Caco-2 (cell line): ENCODE measurements at regions of chr3 and their contacts with region 1.

Region 1: DNA sequence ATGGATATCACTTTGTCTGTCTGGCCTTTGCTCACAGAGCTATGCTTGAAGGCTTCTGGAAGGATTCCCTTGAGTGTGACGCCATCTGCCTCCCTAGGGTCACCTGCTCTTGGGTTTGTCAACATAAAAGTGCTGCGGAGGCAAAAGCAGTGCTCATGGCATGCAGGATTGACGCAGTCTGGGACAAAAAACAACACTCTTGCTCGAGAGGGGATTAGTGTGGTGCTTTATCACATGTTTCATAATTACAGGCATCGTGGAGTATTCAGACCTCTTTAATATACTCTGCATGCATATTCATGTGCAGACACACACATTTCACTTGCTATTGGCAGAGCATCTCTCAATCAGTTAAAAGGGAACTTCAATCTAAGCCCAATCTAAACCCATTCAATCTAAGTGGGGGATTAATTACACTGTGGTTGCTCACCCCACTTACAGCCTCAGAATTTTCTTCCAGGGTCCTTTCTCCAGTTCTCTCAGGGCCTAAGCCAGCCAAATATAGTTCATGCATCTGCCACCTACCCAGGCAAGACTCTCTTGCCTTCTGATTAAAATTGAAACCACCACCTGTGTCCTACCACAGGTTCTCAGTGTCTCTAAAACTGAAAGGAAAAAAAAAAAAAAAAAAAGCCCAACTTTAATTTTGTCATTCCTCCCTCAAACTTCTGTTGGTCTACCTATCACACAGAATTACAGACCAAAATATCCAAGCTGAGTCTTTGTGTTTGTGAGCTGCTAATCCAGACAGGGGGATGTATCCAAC is 75.6 kb downstream of the BFSP2 start:
- DNase-seq: peak in 1 of 2 experiments; percentile 29
- H3K4me3 ChIP-seq: no peak overlapping the region
- H3K4me3 Mint-ChIP-seq: no peak overlapping the region
- H3K27ac Mint-ChIP-seq: peak overlapping the region; percentile 34
- H3K4me1 ChIP-seq: peaks cover 74% of the 10 kb centered on the region
- H3K4me1 Mint-ChIP-seq: peaks cover 70% of the 10 kb centered on the region
- H3K27me3 ChIP-seq: no peaks in the 10 kb centered on the region
- H3K27me3 Mint-ChIP-seq: no peaks in the 10 kb centered on the region
- CTCF ChIP-seq: no peak

Region 2: GRCh38 chr3:133443649-133444422 is 31.6 kb before region 1 on chr3:
- CTCF ChIA-PET with region 1: interaction called, 3 read pairs
- POLR2A ChIA-PET with region 1: no interaction called
- intact Hi-C with region 1: loop called (anchors 5 kb)
- DNase-seq: no peak
- H3K4me3 ChIP-seq: no peak overlapping the region
- H3K4me3 Mint-ChIP-seq: no peak overlapping the region
- H3K27ac Mint-ChIP-seq: peak overlapping the region; percentile 1
- H3K4me1 ChIP-seq: 0 out of 2 replicates have a peak, but pooled peaks cover 3% of the 10 kb centered on the region
- H3K4me1 Mint-ChIP-seq: peaks cover 13% of the 10 kb centered on the region
- H3K27me3 ChIP-seq: no peaks in the 10 kb centered on the region
- H3K27me3 Mint-ChIP-seq: no peaks in the 10 kb centered on the region
- CTCF ChIP-seq: peak in 1 of 2 experiments; percentile 9

Region 3: GRCh38 chr3:133452641-133453319 is 22.6 kb before region 1 on chr3:
- CTCF ChIA-PET with region 1: interaction called, 7 read pairs
- POLR2A ChIA-PET with region 1: no interaction called
- intact Hi-C with region 1: loop called (anchors 1 kb)
- DNase-seq: peak; percentile 80 to 82
- H3K4me3 ChIP-seq: no peak overlapping the region
- H3K4me3 Mint-ChIP-seq: peak overlapping the region; percentile 59
- H3K27ac Mint-ChIP-seq: peak overlapping the region; percentile 72
- H3K4me1 ChIP-seq: peaks cover 60% of the 10 kb centered on the region
- H3K4me1 Mint-ChIP-seq: peaks cover 48% of the 10 kb centered on the region
- H3K27me3 ChIP-seq: no peaks in the 10 kb centered on the region
- H3K27me3 Mint-ChIP-seq: no peaks in the 10 kb centered on the region
- CTCF ChIP-seq: no peak

Region 4: DNA sequence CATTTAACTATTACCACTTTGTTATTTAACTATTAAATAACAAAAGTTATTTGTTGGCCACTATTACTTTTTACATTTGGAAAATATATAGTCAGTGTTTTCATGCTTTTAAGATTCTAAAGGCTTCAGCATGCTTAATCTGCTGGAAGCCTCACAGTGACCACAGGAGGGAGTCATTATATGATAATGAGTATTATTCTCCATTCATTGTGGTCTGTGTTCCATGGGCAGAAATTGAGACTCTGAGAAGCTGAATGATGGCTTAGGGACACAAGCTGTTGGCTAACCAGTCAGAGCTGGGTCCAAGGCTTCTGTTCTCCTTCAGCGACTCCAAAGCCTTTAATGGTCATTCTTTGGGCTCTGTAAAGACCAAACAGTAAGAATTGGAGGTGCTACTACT is 10.9 kb before region 1 on chr3:
- CTCF ChIA-PET with region 1: interaction called, 3 read pairs
- POLR2A ChIA-PET with region 1: no interaction called
- intact Hi-C with region 1: loop called (anchors 1 kb)
- DNase-seq: no peak
- H3K4me3 ChIP-seq: no peak overlapping the region
- H3K4me3 Mint-ChIP-seq: no peak overlapping the region
- H3K27ac Mint-ChIP-seq: no peak overlapping the region
- H3K4me1 ChIP-seq: peaks cover 46% of the 10 kb centered on the region
- H3K4me1 Mint-ChIP-seq: peaks cover 35% of the 10 kb centered on the region
- H3K27me3 ChIP-seq: no peaks in the 10 kb centered on the region
- H3K27me3 Mint-ChIP-seq: no peaks in the 10 kb centered on the region
- CTCF ChIP-seq: peak in 1 of 2 experiments; percentile 25

Region 5: DNA sequence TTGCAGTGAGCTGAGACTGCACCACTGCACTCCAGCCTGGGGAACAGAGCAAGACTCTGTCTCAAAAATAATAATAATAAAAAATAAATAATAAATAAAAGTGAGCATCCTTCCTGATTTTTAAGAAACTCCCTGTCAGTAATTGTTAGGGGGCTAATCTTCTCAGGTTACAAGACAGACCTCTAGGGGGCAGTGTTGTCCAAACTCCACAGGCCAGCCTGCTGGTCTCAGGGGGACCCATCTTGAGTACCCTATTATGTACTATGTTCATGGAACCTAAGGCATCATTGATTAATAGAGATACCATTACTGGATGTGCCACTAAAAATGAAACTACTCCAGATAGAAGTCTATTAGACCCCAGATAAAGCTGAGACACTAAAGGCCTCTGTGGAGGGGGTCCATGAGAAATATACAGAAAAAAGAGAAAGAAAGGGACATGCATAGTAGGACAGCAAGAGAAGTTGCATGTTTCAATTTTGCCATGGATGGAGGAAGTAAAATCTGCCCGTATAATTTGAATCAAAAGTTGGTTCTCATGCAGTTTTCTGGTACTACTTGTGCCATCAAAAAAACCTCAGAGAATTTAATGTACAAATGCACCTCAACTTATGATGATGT is 12.6 kb after region 1 on chr3:
- CTCF ChIA-PET with region 1: interaction called, 6 read pairs
- POLR2A ChIA-PET with region 1: interaction called, 7 read pairs
- intact Hi-C with region 1: loop called (anchors 1 kb)
- DNase-seq: no peak
- H3K4me3 ChIP-seq: no peak overlapping the region
- H3K4me3 Mint-ChIP-seq: no peak overlapping the region
- H3K27ac Mint-ChIP-seq: no peak overlapping the region
- H3K4me1 ChIP-seq: 0 out of 2 replicates have a peak, but pooled peaks cover 3% of the 10 kb centered on the region
- H3K4me1 Mint-ChIP-seq: peaks cover 9% of the 10 kb centered on the region
- H3K27me3 ChIP-seq: no peaks in the 10 kb centered on the region
- H3K27me3 Mint-ChIP-seq: no peaks in the 10 kb centered on the region
- CTCF ChIP-seq: no peak